Heart left ventricle (tissue), 16 donors: ENCODE measurements at regions of chr14 and their contacts with region 1.

Region 1: GRCh38 chr14:69317104-69317755 is 57.3 kb downstream of the GALNT16 start:
- DNase-seq: peak in 4 of 5 donors; percentile 80 to 88 (median 82)
- ATAC-seq: peak; percentile 95 to 97 (median 95)
- H3K4me3 ChIP-seq: no peak overlapping the region
- H3K27ac ChIP-seq: peak overlapping the region in 11 of 12 donors; percentile 61 to 81 (median 74)
- H3K4me1 ChIP-seq: peaks cover 4 to 54% (median 33%) of the 10 kb centered on the region in 12 donors
- H3K27me3 ChIP-seq: no peaks in the 10 kb centered on the region
- CTCF ChIP-seq: peak in 1 of 12 donors; percentile 1
- POLR2A ChIP-seq: no peak

Region 2: DNA sequence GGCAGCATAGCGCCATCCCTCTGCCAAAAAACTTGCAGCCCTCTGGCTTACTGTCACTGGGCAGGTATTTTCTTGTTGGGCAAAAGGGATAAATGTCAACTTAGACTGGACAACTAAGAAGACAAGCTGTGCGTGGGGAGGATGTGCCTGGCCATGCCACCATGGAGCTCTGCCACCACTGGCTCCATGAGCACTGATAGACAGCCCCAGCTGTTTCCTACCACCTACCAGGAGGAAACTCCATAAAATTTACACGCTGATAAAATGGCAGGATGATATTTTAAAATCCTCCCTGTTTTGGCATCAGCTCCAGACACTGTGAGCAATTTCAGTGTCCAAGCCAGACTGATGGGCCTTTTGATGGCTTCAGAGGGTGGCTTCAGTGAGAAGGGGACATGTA is 64.4 kb before region 1 on chr14:
- intact Hi-C with region 1: no loop called
- DNase-seq: no peak
- ATAC-seq: no peak
- H3K4me3 ChIP-seq: no peak overlapping the region
- H3K27ac ChIP-seq: no peak overlapping the region
- H3K4me1 ChIP-seq: peaks cover 0 to 19% (median 5%) of the 10 kb centered on the region in 12 donors
- H3K27me3 ChIP-seq: peaks cover 0 to 4% (median 0%) of the 10 kb centered on the region in 9 donors
- CTCF ChIP-seq: no peak
- POLR2A ChIP-seq: no peak

Region 3: DNA sequence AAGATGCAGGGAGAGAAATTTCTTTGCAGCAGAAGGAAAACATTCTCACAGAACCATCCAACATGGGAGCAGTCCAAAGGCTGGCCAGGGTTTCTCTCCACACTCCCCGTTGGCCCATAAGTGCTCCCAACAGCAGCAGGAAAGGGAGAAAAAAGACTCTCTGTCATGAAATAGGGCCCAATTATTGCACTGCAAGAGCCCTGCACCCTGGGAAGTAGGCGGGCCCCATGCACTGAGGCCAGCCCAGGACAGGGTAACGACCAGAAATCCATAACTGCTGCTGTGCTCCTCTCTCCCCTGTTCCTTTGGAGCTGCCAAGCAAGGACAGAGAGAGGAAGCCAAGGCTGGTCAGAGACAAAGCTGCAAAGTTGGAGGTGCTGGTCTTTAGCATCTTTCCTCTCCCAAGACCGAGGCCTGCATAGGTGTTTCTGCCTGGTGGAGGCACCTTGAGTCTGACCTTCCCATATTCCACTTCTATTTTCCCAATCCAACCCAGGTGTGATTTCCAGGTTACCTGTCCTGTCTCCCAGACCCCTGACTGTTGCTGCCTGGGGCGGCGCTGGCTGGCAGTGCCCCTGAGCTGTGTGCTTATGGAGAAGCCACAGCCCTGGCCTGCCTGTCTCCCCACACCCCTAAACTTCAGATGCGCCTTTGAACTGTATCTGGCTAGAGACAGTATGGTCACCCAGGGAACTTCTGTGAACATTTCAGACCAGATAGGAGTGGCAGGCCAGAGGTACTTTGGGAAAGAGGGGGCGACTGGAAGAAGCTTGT is 50.5 kb before region 1 on chr14:
- intact Hi-C with region 1: loop called in 3 of 10 experiments (anchors 1 to 5 kb)
- DNase-seq: no peak
- ATAC-seq: no peak
- H3K4me3 ChIP-seq: no peak overlapping the region
- H3K27ac ChIP-seq: peak overlapping the region in 4 of 12 donors; percentile 5 to 22 (median 16)
- H3K4me1 ChIP-seq: peaks cover 2 to 91% (median 58%) of the 10 kb centered on the region in 12 donors
- H3K27me3 ChIP-seq: peaks cover 0 to 22% (median 0%) of the 10 kb centered on the region in 9 donors
- CTCF ChIP-seq: no peak
- POLR2A ChIP-seq: no peak

Region 4: DNA sequence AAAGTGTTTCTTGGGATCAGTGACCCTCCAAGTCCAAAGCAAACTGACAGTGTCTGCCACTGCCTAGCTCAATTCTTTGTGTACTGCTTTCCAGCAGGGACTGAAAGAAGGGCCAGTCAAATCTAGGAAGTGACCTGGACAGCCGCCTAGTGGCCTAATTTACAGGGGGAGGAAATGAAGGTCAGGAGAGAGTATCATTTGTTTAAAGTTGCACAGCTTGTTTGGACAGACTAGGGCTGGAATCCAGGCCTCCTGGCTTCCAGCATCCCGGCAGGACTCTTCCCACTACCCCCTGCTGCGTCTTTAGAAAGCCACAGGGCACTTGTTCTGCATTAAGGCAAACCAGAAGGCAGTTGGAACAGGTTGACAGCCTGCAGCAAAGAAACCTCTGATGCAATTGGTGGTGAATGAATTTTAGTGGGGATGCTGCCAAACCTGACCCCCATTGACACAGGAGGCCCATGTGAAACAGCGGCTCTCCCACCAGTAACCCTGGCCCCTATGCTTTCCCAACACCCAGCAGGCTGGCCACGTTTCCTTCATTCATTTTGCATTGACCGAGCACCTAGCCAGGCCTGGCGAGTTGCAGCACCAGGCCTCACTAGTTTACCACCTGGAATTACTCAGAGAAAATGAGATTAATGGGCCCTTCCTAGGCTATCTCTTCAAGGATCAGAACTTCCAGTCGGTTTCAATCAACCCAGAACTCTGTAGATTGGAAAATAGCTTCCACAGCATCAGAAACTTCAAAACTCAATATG is 29.0 kb before region 1 on chr14:
- intact Hi-C with region 1: loop called in 1 of 10 experiments (anchors 2 kb)
- DNase-seq: peak; percentile 61 to 70 (median 63)
- ATAC-seq: peak; percentile 16 to 61 (median 48)
- H3K4me3 ChIP-seq: no peak overlapping the region
- H3K27ac ChIP-seq: peak overlapping the region in 11 of 12 donors; percentile 11 to 69 (median 38)
- H3K4me1 ChIP-seq: peaks cover 3 to 70% (median 54%) of the 10 kb centered on the region in 12 donors
- H3K27me3 ChIP-seq: no peaks in the 10 kb centered on the region
- CTCF ChIP-seq: peak; percentile 28 to 60 (median 45)
- POLR2A ChIP-seq: no peak